BJ (cell line): ENCODE measurements at regions of chr9 and their contacts with region 1.

Region 1: DNA sequence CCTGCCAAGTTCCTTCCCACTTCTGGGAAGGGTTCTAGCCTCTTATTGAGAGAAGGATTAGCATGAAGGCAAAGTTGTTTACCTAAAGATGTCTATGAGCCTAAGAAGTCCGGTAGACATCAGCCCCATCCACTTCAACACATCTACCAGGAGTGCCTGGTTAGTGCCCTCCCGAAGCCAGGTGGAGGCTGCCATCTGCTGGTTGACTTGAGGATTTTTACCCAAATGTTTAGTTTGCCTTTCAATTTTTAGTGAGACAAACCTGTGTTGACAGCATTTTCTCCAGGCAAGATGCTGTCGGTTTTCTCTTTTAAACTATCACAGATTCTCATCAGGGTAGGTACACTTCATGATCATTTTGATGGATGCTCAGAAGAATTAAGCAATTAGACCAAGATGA is 83.6 kb upstream of the TNFSF8 start:
- DNase-seq: no peak
- H3K4me3 ChIP-seq: no peak overlapping the region
- H3K27me3 ChIP-seq: peaks cover 2% of the 10 kb centered on the region; the same call in 1 of the 2 replicates
- CTCF ChIP-seq: peak; percentile 75

Region 2: DNA sequence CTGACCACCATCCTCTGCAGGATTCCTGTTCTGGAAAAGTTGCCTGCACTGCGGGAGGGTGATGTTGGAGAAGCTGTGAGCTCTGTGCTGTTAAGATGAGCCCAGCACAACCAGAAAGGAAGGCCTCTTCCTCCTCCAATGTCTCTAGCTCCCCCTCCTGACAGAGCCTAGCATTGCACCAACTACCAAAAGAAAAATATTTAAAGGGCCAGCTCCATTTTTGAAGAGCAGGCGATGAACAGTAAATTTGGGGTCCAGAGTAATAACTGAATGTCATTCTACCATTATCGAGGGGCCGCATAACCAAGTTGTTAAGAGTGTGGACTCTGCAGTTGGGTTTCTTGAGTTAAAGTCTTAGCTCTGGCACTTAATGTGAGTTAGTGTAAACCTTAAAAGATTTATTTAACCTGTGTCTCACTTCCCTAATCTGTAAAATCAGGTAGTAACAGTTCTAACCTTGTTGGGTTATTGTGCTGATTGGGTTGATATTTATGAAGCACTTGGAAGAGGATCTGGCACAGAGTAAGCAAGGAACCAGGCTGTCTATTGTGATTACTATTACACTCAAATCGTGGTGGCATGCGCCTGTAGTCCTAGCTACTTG is 360.3 kb before region 1 on chr9:
- CTCF ChIA-PET with region 1: interaction called, 14 read pairs
- POLR2A ChIA-PET with region 1: no interaction called
- DNase-seq: peak; percentile 25
- H3K4me3 ChIP-seq: no peak overlapping the region
- H3K27me3 ChIP-seq: no peaks in the 10 kb centered on the region
- CTCF ChIP-seq: peak; percentile 96

Region 3: GRCh38 chr9:114662081-114662989 is 351.7 kb before region 1 on chr9:
- CTCF ChIA-PET with region 1: interaction called, 28 read pairs
- POLR2A ChIA-PET with region 1: no interaction called
- DNase-seq: no peak
- H3K4me3 ChIP-seq: no peak overlapping the region
- H3K27me3 ChIP-seq: peaks cover 8% of the 10 kb centered on the region
- CTCF ChIP-seq: peak; percentile 89

Region 4: DNA sequence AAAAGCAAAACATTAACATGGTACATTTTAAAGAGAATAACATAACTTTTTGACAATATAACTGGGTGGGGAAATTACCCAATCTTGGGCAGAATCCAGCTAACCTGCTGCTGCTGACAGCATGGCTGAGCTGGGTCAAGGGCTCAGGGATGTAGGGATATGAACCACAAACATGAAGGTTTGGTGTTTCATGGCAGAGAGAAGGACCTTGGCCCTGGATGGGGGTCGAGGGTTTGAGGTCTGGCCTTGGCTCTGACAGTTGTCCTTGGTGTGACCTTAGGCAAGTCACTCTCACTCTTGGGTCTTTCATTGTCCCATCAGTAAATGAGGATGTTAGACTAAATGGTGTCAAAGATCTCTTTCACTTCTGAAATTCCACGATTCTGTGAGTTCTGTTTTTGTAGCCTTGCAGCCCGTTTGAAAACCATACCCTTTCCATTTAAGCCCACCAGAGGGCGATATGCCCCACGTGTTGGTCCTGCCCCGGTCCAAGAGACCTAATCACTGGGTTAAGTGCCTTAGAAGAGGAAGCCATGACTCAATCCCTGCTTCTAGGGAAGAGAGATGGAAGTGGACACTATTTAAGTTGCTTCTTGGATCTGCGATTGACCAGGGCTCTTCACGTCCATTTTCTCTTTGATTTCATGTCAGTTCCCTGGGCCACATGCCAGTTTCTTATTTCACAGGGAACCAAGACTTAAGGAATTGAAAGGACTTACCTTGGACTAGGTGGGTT is 275.2 kb before region 1 on chr9:
- CTCF ChIA-PET with region 1: interaction called, 28 read pairs
- POLR2A ChIA-PET with region 1: no interaction called
- DNase-seq: peak; percentile 34
- H3K4me3 ChIP-seq: no peak overlapping the region
- H3K27me3 ChIP-seq: no peaks in the 10 kb centered on the region; the same call in 1 of the 2 replicates
- CTCF ChIP-seq: peak; percentile 82

Region 5: GRCh38 chr9:114914139-114914538 is 99.9 kb before region 1 on chr9:
- CTCF ChIA-PET with region 1: interaction called, 30 read pairs
- POLR2A ChIA-PET with region 1: no interaction called
- DNase-seq: no peak
- H3K4me3 ChIP-seq: no peak overlapping the region
- H3K27me3 ChIP-seq: peaks cover 3% of the 10 kb centered on the region
- CTCF ChIP-seq: peak; percentile 28; the same call in 1 of the 2 replicates